ENCODE measurements at regions of chr3 and their contacts with region 1.

Region 1: DNA sequence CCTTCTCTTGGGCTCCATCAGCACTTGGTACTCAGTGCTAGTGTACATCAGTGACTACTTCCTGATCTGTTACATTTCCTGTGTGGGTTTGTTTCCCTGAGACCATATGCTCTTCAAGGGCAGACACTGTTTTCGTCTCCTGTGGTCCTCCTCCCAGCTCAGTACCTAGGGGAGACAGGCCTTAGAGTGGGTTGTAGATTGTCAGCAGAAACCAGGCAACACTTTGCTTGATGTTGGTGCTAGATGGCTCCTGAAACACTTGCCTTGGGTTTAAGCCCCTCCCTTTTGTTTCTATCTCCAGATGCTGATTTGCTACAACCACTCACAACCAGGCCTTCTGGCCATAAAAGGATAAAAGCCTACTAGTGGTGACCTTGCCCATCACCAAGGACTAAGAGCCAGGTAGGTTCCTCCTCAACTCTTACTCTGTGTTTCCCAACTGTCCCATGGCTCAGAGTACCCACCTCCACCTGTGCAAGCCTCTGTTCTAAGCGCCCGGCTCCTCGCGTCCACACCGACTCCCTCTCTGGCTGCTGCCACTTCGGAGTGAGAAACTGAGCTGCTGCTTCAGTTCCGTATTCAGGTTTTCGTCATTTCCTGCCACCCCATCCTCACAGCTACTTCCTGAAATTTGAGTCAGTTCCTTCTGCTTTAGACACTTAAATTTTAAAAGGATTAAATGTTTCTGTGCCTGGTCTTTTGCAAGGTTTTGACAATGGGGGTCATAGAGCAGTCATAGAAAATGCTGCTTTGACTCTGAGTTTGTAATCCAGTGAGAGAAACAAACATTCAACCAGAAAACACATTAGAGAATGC is at the start of gene HCLS1:
- DNase-seq: peak; percentile 85
- ATAC-seq: peak; percentile 86
- H3K4me3 Mint-ChIP-seq: peak within 1 kb of the TSS; percentile 93
- H3K27ac Mint-ChIP-seq: peak within 1 kb of the TSS; percentile 100
- H3K4me1 Mint-ChIP-seq: peaks cover 56% of the 10 kb centered on the region
- H3K27me3 Mint-ChIP-seq: no peaks in the 10 kb centered on the region
- total RNA-seq, gene HCLS1: 280 to 288 TPM

Region 2: DNA sequence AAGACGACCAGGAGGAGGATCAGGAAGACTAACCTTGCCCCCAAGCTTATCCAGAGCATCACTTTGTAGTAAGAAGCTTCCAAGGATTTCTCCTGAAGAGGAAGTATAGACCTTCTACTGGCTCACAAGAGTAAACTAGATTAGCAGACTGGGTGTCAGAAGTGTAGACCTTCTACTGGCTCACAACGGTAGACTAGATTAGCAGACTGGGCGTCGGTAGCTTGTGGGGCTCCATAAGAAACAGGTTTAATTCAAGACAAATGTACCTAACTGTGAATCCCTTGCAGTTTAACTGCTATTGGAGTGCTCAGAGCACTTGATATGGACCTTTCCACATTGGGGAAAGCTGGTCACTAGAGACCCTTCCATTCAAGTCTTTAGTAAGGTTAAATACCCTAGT is 54.5 kb before region 1 on chr3:
- CTCF ChIA-PET with region 1: no interaction called
- POLR2A ChIA-PET with region 1: no interaction called
- DNase-seq: no peak
- ATAC-seq: no peak
- H3K4me3 Mint-ChIP-seq: no peak overlapping the region
- H3K27ac Mint-ChIP-seq: no peak overlapping the region
- H3K4me1 Mint-ChIP-seq: no peaks in the 10 kb centered on the region
- H3K27me3 Mint-ChIP-seq: peaks cover 5% of the 10 kb centered on the region

Region 3: GRCh38 chr3:121621491-121621890 is 39.1 kb before region 1 on chr3:
- CTCF ChIA-PET with region 1: no interaction called
- POLR2A ChIA-PET with region 1: no interaction called
- DNase-seq: no peak
- ATAC-seq: no peak
- H3K4me3 Mint-ChIP-seq: no peak overlapping the region
- H3K27ac Mint-ChIP-seq: no peak overlapping the region
- H3K4me1 Mint-ChIP-seq: no peaks in the 10 kb centered on the region
- H3K27me3 Mint-ChIP-seq: peaks cover 7% of the 10 kb centered on the region

Region 4: DNA sequence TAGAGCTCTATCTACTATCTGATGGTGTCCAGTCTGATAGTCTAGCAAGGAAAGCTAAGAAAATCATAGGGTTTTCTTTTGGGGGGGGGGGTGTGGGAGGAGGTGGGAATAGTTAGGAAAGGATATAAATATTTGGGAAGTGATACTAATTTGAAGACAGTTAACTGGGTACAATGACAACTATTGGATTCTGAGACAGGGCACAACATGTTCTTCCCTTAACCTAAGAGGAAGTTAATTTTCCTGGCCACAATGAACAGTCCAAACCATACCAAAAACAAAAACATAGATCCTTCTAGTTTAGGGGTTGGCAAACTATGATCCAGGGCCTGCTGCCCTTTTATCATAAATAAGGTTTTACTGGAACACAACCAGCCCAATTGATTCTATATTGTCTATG is 10.1 kb after region 1 on chr3:
- CTCF ChIA-PET with region 1: no interaction called
- POLR2A ChIA-PET with region 1: interaction called, 15 read pairs
- DNase-seq: no peak
- ATAC-seq: no peak
- H3K4me3 Mint-ChIP-seq: no peak overlapping the region
- H3K27ac Mint-ChIP-seq: no peak overlapping the region
- H3K4me1 Mint-ChIP-seq: no peaks in the 10 kb centered on the region
- H3K27me3 Mint-ChIP-seq: no peaks in the 10 kb centered on the region

Region 5: DNA sequence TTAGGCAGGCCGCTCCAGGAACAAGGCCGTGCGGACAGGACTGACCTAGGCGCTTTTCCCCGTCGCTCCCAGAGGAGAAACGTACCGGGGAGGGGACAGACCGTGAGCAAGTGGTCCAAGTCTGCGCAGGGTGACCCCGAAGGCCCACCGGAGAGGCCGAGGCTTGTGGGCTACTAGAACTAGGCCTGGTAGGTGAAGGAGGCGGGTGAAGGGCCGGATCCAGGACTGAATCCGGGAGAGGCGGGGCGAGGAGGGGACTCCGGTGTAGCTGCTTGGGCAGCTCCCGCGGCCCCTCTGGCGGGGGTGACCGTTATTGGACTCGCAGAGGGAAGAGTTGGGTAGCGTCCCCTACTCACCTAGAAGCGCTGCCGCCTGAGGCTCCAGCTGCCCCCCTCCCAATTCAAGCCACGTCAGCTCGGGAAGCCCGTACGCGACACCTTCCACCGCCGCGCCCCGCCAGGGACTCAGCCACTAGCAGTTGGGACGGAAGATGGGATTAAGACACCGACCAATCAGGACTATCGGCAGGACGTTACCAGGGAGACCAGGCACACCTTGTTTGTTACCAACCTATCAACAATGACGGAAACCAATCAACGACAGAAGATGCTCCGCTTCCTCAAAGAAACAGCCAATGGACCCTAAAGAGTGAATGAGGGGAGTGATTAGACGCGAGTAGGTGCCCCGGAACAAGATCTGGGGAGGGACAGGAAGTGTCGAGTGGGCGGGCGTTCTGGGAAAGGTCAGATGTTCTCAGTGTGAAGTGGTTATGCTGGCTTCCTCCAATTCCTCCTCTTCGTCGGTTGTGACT is 88.9 kb after region 1 on chr3 and contains the start of gene GOLGB1:
- CTCF ChIA-PET with region 1: interaction called, 4 read pairs
- POLR2A ChIA-PET with region 1: interaction called, 20 read pairs
- DNase-seq: peak; percentile 96
- ATAC-seq: peak; percentile 96
- H3K4me3 Mint-ChIP-seq: no peak within 1 kb of the TSS
- H3K27ac Mint-ChIP-seq: no peak within 1 kb of the TSS
- H3K4me1 Mint-ChIP-seq: peaks cover 11% of the 10 kb centered on the region
- H3K27me3 Mint-ChIP-seq: peaks cover 11% of the 10 kb centered on the region
- total RNA-seq, gene GOLGB1: 26.0 to 27.4 TPM

Measured in activated CD8-positive, alpha-beta T cell treated with anti-CD3 and anti-CD28 coated beads, Interleukin-2, amount 10 ng/mL, durations not matched to agents 7 days and 5 days (primary cell).